Gastrocnemius medialis (tissue), 4 donors: ENCODE measurements at regions of chr3 and their contacts with region 1.

Region 1: GRCh38 chr3:11568503-11569155 is 75.1 kb downstream of the VGLL4 start:
- DNase-seq: peak; percentile 74 to 75
- ATAC-seq: peak; percentile 40 to 67
- H3K4me3 ChIP-seq: peak overlapping the region; percentile 20 to 42 (median 34)
- H3K27ac ChIP-seq: peak overlapping the region; percentile 88 to 90 (median 88)
- H3K4me1 ChIP-seq: peaks cover 42 to 54% of the 10 kb centered on the region in 2 donors
- H3K27me3 ChIP-seq: no peaks in the 10 kb centered on the region
- CTCF ChIP-seq: no peak
- POLR2A ChIP-seq: peak; percentile 11 to 22

Region 2: DNA sequence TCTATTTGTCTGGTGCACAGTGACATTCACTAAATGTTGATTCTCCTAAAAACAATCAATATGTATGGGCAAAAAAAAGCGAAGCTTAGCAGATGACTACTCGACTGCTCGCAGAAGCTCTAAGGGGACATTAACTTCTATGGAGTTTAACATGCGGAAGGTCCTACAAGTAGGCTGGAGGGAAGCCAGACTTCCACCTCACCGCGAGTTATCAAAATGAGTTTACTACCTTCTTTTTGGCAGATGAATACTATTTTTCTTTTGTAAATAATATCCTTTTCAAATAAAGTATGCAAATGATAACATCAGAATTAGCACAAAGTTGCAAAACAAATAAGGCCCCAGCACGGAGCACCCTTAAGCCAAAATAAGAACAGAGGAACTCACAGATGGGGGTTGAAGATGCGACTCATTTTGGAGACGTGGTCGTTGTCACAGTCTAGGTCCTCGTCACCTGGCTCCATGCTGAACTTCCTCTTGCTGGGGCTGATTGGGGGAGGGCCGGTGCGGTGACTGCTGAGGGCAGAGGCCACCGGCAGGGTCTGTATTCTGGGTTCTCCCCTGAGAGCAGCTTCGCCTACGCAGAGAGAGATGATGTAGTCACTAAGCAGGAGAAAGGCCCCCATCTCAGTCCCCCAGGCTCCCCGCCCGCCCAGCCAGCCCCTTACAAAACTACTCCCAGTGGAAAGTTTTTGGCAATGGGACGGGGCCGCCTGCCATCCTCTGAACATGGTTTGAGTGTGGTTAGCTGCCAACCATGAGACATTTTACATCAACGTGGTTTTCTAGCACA is 33.0 kb after region 1 on chr3:
- in situ Hi-C with region 1: no loop called
- intact Hi-C with region 1: loop called (anchors 2 kb)
- DNase-seq: peak in 1 of 2 donors; percentile 52
- ATAC-seq: no peak
- H3K4me3 ChIP-seq: no peak overlapping the region
- H3K27ac ChIP-seq: peak overlapping the region; percentile 71 to 88 (median 83)
- H3K4me1 ChIP-seq: peaks cover 67 to 83% of the 10 kb centered on the region in 2 donors
- H3K27me3 ChIP-seq: no peaks in the 10 kb centered on the region
- CTCF ChIP-seq: no peak
- POLR2A ChIP-seq: no peak